ENCODE measurements at regions of chr6 and their contacts with region 1.

Region 1: GRCh38 chr6:144434308-144434990 is 149.3 kb downstream of the UTRN start:
- DNase-seq: no peak
- ATAC-seq: peak in 3 of 4 donors; percentile 47 to 52 (median 47)
- H3K4me3 ChIP-seq: no peak overlapping the region
- H3K27ac ChIP-seq: peak overlapping the region in 2 of 12 donors; percentile 12 to 36
- H3K4me1 ChIP-seq: peaks cover 0 to 35% (median 16%) of the 10 kb centered on the region in 12 donors
- H3K27me3 ChIP-seq: no peaks in the 10 kb centered on the region
- CTCF ChIP-seq: no peak
- POLR2A ChIP-seq: no peak

Region 2: DNA sequence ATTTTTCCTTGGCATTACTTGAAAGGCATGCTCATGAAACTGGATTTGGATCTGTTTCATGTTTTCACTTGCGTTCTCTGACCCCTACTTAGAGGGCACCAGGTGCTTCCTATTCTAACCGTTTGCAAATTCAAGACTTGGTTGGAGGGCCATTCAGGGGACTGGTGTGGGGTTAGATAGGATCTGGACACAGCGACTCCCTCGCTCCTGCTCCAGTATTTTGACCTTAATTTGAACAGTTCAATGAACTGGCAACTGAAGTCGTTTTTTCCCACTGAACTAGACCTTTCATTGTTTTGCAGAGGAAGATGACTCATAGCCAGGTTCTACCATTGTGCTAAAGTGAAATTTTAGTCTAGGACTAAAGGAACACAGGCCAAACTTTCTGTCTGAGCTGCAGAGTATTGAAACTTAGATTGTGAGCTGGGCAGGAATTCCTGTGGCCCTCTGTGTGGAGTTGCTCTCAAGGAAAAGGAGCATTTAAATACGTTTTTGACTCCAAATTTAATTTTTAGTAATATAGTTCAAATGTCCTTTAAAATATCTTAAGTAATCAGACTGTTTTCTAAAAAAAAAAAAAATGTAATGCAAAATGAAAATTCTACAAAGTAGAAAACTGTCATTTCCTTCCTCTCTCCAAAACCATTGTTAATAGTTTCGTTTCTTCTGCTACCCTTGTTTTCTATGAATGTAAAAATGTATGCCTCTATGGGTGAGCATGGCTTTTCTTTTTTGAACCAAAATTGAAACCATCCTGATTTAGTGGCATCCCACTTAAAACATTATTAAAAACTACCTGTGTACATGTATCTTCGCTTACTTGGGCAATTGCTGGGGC is 84.5 kb before region 1 on chr6:
- intact Hi-C with region 1: loop called in 1 of 10 experiments (anchors 5 kb)
- DNase-seq: peak in 2 of 5 donors; percentile 38 to 52
- ATAC-seq: peak; percentile 64 to 89 (median 72)
- H3K4me3 ChIP-seq: peak overlapping the region in 8 of 12 donors; percentile 1 to 33 (median 10)
- H3K27ac ChIP-seq: peak overlapping the region in 11 of 12 donors; percentile 35 to 82 (median 67)
- H3K4me1 ChIP-seq: peaks cover 18 to 98% (median 71%) of the 10 kb centered on the region in 12 donors
- H3K27me3 ChIP-seq: no peaks in the 10 kb centered on the region
- CTCF ChIP-seq: no peak
- POLR2A ChIP-seq: no peak

Region 3: DNA sequence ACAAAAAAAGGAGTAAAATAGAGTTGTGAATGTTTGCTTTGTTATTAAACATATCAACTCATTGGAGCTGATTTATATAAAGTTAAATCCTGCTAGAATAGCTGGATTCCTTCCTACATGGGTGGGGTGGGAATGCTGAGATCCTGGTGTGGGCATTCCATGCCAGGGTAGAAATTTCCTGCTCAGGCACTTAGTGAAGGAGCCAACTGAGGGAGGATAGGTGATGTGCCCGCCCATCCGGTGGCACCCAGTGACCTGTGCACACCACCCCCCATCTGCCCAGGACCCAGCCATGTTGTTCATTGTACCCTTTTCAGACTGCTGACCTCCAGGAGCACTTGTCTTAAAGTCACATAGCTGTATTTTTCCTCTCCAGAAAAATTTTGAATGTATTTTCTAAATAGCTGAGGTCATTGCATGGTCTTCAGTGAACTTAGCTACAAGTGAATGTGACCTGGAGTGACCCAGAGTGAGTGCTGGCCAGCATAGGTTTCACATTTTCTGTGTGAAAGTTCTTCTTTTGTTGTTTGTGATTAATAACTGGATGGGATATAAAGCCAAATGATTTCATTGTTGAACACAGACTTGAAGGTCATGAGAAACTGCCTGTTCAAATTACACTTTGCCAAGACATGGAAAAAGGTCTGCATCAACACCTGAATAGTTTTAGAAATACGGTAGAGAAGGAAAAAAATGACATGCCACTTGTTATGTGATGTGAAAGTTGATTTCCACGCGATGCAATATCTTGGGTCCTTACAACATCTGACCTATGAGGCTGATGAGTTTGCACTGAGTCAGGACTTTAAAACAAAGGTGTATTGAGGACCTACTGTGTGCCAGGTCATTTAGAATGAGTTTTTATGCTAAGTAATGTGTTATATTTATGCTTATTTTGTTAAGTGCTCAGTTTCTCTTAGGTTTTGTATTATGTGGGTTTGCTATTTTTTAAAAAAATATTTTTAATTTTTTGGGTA is 72.1 kb before region 1 on chr6:
- intact Hi-C with region 1: loop called in 1 of 10 experiments (anchors 10 kb)
- DNase-seq: peak in 2 of 5 donors; percentile 21 to 42
- ATAC-seq: peak; percentile 23 to 78 (median 69)
- H3K4me3 ChIP-seq: no peak overlapping the region
- H3K27ac ChIP-seq: peak overlapping the region in 10 of 12 donors; percentile 0 to 63 (median 41)
- H3K4me1 ChIP-seq: peaks cover 0 to 81% (median 43%) of the 10 kb centered on the region in 12 donors
- H3K27me3 ChIP-seq: no peaks in the 10 kb centered on the region
- CTCF ChIP-seq: no peak
- POLR2A ChIP-seq: no peak

Region 4: GRCh38 chr6:144482142-144482541 is 47.7 kb after region 1 on chr6:
- intact Hi-C with region 1: loop called in 1 of 10 experiments (anchors 5 kb)
- DNase-seq: peak; percentile 69 to 77 (median 72)
- ATAC-seq: peak in 2 of 4 donors; percentile 23 to 41
- H3K4me3 ChIP-seq: no peak overlapping the region
- H3K27ac ChIP-seq: no peak overlapping the region
- H3K4me1 ChIP-seq: peaks cover 0 to 38% (median 21%) of the 10 kb centered on the region in 12 donors
- H3K27me3 ChIP-seq: no peaks in the 10 kb centered on the region
- CTCF ChIP-seq: peak; percentile 50 to 80 (median 66)
- POLR2A ChIP-seq: no peak